ENCODE measurements at regions of chr3 and their contacts with region 1.

Region 1: GRCh38 chr3:15783361-15783969 is 14.3 kb downstream of the ANKRD28 start:
- DNase-seq: no peak
- H3K4me3 ChIP-seq: no peak overlapping the region
- H3K27ac ChIP-seq: no peak overlapping the region
- H3K27me3 ChIP-seq: no peaks in the 10 kb centered on the region
- CTCF ChIP-seq: no peak

Region 2: GRCh38 chr3:15486979-15487378 is 296.5 kb before region 1 on chr3:
- CTCF ChIA-PET with region 1: no interaction called
- POLR2A ChIA-PET with region 1: no interaction called
- DNase-seq: no peak
- H3K4me3 ChIP-seq: no peak overlapping the region
- H3K27ac ChIP-seq: no peak overlapping the region
- H3K27me3 ChIP-seq: no peaks in the 10 kb centered on the region
- CTCF ChIP-seq: no peak

Region 3: GRCh38 chr3:15654891-15655290 is 128.6 kb before region 1 on chr3:
- CTCF ChIA-PET with region 1: no interaction called
- POLR2A ChIA-PET with region 1: no interaction called
- DNase-seq: no peak
- H3K4me3 ChIP-seq: no peak overlapping the region
- H3K27ac ChIP-seq: no peak overlapping the region
- H3K27me3 ChIP-seq: no peaks in the 10 kb centered on the region
- CTCF ChIP-seq: no peak

Region 4: GRCh38 chr3:15797642-15798303 is 14.3 kb after region 1 on chr3 and contains the start of gene ANKRD28:
- CTCF ChIA-PET with region 1: interaction called, 16 read pairs
- POLR2A ChIA-PET with region 1: interaction called, 3 read pairs
- DNase-seq: peak; percentile 92
- H3K4me3 ChIP-seq: peak within 1 kb of the TSS; percentile 71
- H3K27ac ChIP-seq: peak within 1 kb of the TSS; percentile 96
- H3K27me3 ChIP-seq: no peaks in the 10 kb centered on the region
- CTCF ChIP-seq: peak; percentile 42
- polyA plus RNA-seq, gene ANKRD28: 114 and 134 TPM in 2 replicates

Measured in AG04450 (cell line).